GM12878 (cell line): ENCODE measurements at regions of chr4 and their contacts with region 1.

Region 1: DNA sequence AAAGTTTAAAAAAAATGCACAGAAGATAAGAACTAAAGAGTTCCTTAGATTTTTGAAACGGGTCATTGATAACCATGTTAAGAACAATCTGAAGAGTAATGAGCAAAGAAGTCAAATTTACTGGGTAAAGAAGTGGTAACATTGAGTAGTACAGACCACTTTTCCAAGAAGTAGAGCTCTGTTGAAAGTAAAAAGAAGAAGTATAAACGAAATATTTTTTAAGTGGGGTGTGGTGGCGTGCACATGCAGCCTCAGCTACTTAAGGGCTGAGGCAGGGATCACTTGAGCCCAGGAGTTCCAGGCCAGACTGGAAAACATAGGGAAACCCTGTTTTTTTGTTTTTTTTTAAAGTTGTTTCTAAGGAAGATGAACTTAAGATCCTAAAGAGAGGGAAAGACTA is 68.5 kb downstream of the UBA6 start:
- DNase-seq: no peak
- ATAC-seq: peak; percentile 40; the same call in 1 of the 3 replicates
- H3K4me3 ChIP-seq: no peak overlapping the region
- H3K27ac ChIP-seq: no peak overlapping the region
- H3K4me1 ChIP-seq: no peaks in the 10 kb centered on the region
- H3K27me3 ChIP-seq: no peaks in the 10 kb centered on the region
- CTCF ChIP-seq: no peak
- EP300 ChIP-seq: no peak
- POLR2A ChIP-seq: no peak
- RAD21 ChIP-seq: no peak

Region 2: DNA sequence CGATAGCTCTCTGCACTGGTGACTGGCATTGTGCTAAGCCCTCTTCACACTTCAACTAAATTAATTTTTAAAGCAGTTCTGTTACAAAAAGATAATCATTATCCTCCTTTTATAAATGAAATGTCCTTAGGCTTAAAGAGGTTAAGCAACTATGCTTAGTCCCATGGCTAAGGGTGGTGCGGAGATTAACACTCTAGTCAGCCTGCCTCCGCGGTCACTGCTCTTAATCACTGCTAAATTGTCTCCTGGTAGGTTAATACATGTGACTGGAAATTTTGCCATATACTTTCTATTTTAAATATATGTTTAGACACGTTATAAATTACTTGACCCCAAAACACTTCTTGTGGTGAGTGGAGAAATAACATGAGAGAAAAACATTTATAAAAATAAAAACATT is 560.9 kb before region 1 on chr4:
- CTCF ChIA-PET with region 1: no interaction called
- POLR2A ChIA-PET with region 1: no interaction called
- RAD21 ChIA-PET with region 1: no interaction called
- SMC1A ChIA-PET with region 1: no interaction called
- in situ Hi-C with region 1: no loop called
- intact Hi-C with region 1: no loop called
- DNase-seq: no peak
- ATAC-seq: no peak
- H3K4me3 ChIP-seq: no peak overlapping the region
- H3K27ac ChIP-seq: no peak overlapping the region
- H3K4me1 ChIP-seq: no peaks in the 10 kb centered on the region
- H3K27me3 ChIP-seq: no peaks in the 10 kb centered on the region
- CTCF ChIP-seq: no peak
- EP300 ChIP-seq: no peak
- POLR2A ChIP-seq: no peak
- RAD21 ChIP-seq: no peak

Region 3: GRCh38 chr4:67668315-67668714 is 35.8 kb after region 1 on chr4:
- CTCF ChIA-PET with region 1: interaction called, 3 read pairs
- POLR2A ChIA-PET with region 1: no interaction called
- RAD21 ChIA-PET with region 1: no interaction called
- SMC1A ChIA-PET with region 1: no interaction called
- in situ Hi-C with region 1: no loop called
- intact Hi-C with region 1: loop called (anchors 5 kb)
- DNase-seq: no peak
- ATAC-seq: no peak
- H3K4me3 ChIP-seq: no peak overlapping the region
- H3K27ac ChIP-seq: no peak overlapping the region
- H3K4me1 ChIP-seq: no peaks in the 10 kb centered on the region
- H3K27me3 ChIP-seq: no peaks in the 10 kb centered on the region
- CTCF ChIP-seq: no peak
- EP300 ChIP-seq: no peak
- POLR2A ChIP-seq: no peak
- RAD21 ChIP-seq: no peak

Region 4: DNA sequence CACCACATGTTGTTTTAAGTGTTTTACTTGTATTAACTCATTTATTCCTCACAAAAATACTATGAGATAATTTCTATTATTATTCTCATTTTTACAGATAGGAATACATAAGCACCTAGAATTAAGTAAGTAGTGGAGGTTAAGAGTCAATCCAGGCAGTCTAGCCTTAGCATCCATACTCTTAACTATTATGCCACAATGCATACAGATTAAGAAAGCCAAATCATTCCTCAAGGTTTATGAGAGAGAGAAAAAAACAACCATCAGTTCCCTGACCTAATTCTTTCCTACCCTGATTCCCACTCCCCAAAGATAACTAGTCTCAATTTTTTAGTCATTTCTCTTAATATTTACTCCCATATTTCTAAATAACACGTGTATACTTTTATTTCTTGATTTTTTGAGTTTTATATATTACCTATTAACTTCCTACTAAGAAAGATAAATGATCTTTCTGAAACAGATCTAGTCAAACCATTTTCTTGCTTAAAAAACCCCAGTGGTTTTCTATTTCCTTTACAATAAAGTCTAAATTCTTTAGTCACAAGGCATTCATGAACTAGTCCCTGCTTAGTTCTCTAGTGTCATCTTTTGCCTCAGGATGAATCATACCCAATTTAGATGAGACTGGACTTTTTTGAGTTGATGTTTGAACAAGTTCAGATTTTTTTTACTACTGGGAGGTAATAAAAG is 52.5 kb after region 1 on chr4:
- CTCF ChIA-PET with region 1: no interaction called
- POLR2A ChIA-PET with region 1: no interaction called
- RAD21 ChIA-PET with region 1: no interaction called
- SMC1A ChIA-PET with region 1: no interaction called
- in situ Hi-C with region 1: no loop called
- intact Hi-C with region 1: no loop called
- DNase-seq: no peak
- ATAC-seq: peak; percentile 72
- H3K4me3 ChIP-seq: no peak overlapping the region
- H3K27ac ChIP-seq: no peak overlapping the region
- H3K4me1 ChIP-seq: no peaks in the 10 kb centered on the region
- H3K27me3 ChIP-seq: no peaks in the 10 kb centered on the region
- CTCF ChIP-seq: no peak
- EP300 ChIP-seq: no peak
- POLR2A ChIP-seq: no peak
- RAD21 ChIP-seq: no peak